Ascending aorta (tissue), 2 donors: ENCODE measurements at regions of chr9 and their contacts with region 1.

Region 1: GRCh38 chr9:6015278-6016157 is at the start of gene RANBP6:
- DNase-seq: peak; percentile 41 to 95
- H3K4me3 ChIP-seq: peak within 1 kb of the TSS; percentile 55 to 75
- H3K27ac ChIP-seq: peak within 1 kb of the TSS; percentile 72
- H3K4me1 ChIP-seq: peaks cover 0 to 9% of the 10 kb centered on the region in 2 donors
- H3K27me3 ChIP-seq: no peaks in the 10 kb centered on the region
- CTCF ChIP-seq: no peak
- total RNA-seq, gene RANBP6: 8.3 TPM

Region 2: DNA sequence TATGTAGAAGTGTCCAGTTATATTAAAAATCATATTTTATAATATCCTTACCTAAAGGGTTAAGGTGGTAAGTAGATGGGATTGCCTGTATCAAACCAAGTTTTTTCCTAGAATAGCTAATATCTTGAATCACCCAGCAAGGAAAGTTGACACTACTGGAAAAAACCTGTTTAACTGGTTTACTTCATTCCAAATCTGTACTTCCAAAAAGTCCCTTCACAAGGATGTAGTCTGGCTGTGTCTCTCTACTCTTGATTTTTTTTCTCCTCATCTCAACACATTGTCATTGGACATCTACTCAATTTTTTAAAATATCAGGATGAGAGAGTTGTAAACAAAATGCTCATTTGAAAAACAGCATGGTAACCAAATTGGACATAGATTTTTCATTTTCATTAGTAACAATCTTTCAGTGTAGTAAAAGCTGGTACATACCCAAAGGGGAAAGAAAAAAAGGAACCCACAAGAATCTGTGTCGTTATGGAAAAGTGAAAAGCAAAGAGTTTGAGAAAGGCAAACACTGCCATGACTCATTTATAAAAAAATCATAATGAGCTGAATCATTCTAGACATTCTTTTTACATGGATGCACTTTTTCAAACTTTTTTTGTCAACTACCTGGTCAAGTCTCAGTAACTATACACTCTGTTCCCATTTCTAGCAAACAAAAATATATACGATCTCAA is 1889.2 kb before region 1 on chr9:
- intact Hi-C with region 1: loop called (anchors 10 kb)
- DNase-seq: no peak
- H3K4me3 ChIP-seq: no peak overlapping the region
- H3K27ac ChIP-seq: peak overlapping the region; percentile 54 to 57
- H3K4me1 ChIP-seq: peaks cover 0 to 19% of the 10 kb centered on the region in 2 donors
- H3K27me3 ChIP-seq: no peaks in the 10 kb centered on the region
- CTCF ChIP-seq: no peak

Region 3: DNA sequence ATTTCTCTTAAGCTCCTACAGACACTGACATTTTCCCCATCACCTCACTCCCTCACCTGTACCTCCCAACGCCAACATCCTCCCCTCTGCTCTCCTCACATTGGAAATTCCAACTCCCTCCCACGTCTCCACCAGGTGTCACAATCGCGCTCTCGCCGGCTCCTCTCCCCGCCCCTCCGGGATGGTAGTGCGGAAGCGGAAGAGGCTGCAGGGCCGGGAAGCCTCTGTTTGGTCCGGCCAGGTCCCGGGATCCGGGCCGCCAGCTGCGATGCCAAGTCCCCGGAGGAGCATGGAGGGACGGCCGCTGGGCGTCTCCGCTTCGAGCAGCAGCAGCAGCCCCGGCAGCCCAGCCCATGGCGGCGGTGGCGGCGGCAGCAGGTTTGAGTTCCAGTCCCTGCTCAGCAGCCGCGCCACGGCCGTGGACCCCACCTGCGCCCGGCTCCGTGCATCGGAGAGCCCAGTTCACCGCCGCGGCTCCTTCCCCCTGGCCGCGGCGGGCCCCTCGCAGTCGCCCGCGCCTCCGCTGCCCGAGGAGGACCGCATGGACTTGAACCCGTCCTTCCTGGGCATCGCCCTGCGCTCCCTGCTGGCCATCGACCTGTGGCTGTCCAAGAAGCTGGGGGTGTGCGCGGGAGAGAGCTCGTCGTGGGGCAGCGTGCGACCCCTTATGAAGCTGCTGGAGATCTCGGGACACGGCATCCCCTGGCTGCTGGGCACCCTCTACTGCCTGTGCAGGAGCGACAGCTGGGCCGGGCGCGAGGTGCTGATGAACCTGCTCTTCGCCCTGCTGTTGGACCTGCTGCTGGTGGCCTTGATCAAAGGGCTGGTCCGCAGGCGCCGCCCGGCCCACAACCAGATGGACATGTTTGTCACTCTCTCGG is 1353.2 kb before region 1 on chr9 and contains the start of gene PLPP6:
- intact Hi-C with region 1: loop called (anchors 10 kb)
- DNase-seq: peak; percentile 59 to 95
- H3K4me3 ChIP-seq: peak within 1 kb of the TSS; percentile 66 to 86
- H3K27ac ChIP-seq: peak within 1 kb of the TSS; percentile 82 to 87
- H3K4me1 ChIP-seq: peaks cover 7 to 16% of the 10 kb centered on the region in 2 donors
- H3K27me3 ChIP-seq: no peaks in the 10 kb centered on the region
- CTCF ChIP-seq: peak; percentile 33 to 67 (median 45)
- total RNA-seq, gene PLPP6: 19.2 TPM

Region 4: DNA sequence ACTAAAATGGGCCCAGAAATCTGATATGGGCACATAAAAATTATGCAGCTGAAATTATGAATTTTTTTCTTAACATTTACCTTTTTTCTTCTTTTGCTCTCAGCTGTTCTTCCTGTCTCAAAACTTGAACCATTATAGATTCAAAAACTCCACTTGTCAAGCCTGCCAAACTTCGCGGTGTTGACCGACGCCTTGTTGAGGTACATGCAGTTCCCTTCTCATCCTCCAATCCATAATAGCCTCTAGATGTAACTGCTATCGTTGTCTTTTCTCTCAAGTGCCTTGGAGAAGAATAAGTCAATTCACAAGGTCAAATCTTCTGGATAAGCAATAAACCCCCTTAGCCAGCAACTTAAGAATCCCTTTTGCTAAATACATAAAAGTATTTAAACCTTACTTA is 27.3 kb before region 1 on chr9:
- intact Hi-C with region 1: no loop called
- DNase-seq: no peak
- H3K4me3 ChIP-seq: no peak overlapping the region
- H3K27ac ChIP-seq: no peak overlapping the region
- H3K4me1 ChIP-seq: no peaks in the 10 kb centered on the region
- H3K27me3 ChIP-seq: no peaks in the 10 kb centered on the region
- CTCF ChIP-seq: no peak

Region 5: DNA sequence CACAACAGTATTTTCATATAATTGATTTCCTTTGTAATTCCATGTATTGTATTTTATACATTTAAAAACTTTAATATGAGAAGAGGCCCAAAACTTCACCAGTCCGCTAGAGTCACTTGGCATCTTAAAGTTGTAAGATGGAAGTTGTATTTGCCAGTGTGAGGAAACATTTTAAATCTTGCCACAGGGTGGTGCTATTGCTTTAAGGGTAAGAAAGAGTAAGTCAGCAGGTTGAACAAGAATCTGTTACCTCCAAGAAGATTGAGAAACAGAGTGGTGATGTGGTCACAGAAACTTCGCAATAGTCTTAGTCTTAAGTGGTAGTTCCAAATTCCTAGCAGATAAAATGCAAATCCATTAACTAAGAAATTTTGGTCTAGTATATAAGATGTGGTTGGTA is 39.7 kb after region 1 on chr9:
- intact Hi-C with region 1: no loop called
- DNase-seq: no peak
- H3K4me3 ChIP-seq: no peak overlapping the region
- H3K27ac ChIP-seq: no peak overlapping the region
- H3K4me1 ChIP-seq: no peaks in the 10 kb centered on the region
- H3K27me3 ChIP-seq: no peaks in the 10 kb centered on the region
- CTCF ChIP-seq: peak in 1 of 3 experiments; percentile 48

Region 6: DNA sequence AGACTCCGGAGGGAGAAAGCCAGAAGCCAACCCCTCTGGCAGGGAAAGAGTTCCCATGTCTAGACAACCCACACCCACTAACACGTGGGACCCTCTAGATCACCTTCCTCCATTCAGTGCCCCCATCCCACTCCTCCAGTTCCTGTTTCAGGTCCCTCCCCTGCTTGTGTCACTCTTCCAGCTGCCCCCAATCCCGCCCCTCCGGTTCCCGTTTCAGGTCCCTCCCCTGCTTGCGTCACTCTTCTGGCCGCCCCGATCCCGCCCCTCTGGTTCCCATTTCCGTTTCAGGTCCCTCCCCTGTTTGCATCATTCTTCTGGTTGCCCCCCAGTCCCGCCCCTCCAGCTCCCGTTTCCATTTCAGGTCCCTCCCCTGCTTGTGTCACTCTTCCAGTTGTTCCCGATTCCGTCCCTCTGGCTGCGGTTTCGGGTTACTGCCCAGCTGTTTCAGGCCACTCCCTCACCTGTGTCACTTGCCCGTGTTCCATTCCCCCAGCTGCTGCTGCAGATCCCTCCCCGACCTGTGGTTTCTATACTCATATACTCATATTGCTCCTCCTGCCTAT is 64.7 kb after region 1 on chr9:
- intact Hi-C with region 1: loop called (anchors 2 kb)
- DNase-seq: peak; percentile 75 to 92
- H3K4me3 ChIP-seq: peak overlapping the region; percentile 51 to 66
- H3K27ac ChIP-seq: peak overlapping the region; percentile 69 to 74
- H3K4me1 ChIP-seq: no peaks in the 10 kb centered on the region
- H3K27me3 ChIP-seq: no peaks in the 10 kb centered on the region
- CTCF ChIP-seq: peak in 2 of 3 experiments; percentile 13 to 15

Region 7: GRCh38 chr9:6096821-6097220 is 81.3 kb after region 1 on chr9:
- intact Hi-C with region 1: no loop called
- DNase-seq: no peak
- H3K4me3 ChIP-seq: no peak overlapping the region
- H3K27ac ChIP-seq: no peak overlapping the region
- H3K4me1 ChIP-seq: no peaks in the 10 kb centered on the region
- H3K27me3 ChIP-seq: no peaks in the 10 kb centered on the region
- CTCF ChIP-seq: no peak

Region 8: GRCh38 chr9:6184749-6185645 is 169.5 kb after region 1 on chr9:
- intact Hi-C with region 1: no loop called
- DNase-seq: no peak
- H3K4me3 ChIP-seq: no peak overlapping the region
- H3K27ac ChIP-seq: no peak overlapping the region
- H3K4me1 ChIP-seq: no peaks in the 10 kb centered on the region
- H3K27me3 ChIP-seq: no peaks in the 10 kb centered on the region
- CTCF ChIP-seq: no peak